Dendritic cell treated with granulocyte-macrophage colony-stimulating factor and Interleukin-4, amounts not matched to agents 40 ng/mL and 50 ng/mL, for 4 days (primary cell): ENCODE measurements at regions of chr1 and their contacts with region 1.

Region 1: GRCh38 chr1:167553136-167554027 is at the start of gene CREG1:
- H3K4me3 Mint-ChIP-seq: peak within 1 kb of the TSS; percentile 92
- H3K27ac Mint-ChIP-seq: peak within 1 kb of the TSS; percentile 87
- H3K4me1 Mint-ChIP-seq: peaks cover 53% of the 10 kb centered on the region
- H3K27me3 Mint-ChIP-seq: no peaks in the 10 kb centered on the region

Region 2: DNA sequence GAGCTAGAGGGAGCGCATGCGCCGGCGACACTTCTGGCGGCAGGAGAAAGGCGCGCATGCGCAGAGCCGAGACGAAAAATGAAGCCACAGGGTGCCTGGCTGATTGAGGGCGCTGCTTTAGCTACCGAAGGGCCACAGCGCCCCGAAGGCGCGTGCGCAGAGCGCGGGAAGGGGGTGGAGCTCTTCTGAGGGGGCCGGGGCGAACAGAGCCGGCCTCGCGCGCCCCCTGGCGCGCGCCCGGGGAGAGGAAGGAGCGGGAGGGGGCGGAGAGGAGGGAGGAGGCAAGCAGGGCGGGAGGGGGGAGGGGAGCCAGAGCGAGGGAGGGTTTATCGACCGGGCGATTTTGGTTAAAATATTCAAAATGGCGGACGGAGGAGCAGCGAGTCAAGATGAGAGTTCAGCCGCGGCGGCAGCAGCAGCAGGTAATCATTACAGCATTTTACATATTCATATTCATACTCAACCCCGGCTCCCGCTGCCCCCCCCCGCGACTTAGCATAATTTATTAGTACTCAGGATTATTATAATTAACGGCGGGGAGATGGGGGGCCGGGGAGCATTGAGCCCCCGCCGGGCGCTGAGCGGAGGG is 332.8 kb before region 1 on chr1 and contains the start of gene POU2F1:
- intact Hi-C with region 1: loop called (anchors 5 kb)
- H3K4me3 Mint-ChIP-seq: peak within 1 kb of the TSS; percentile 83
- H3K27ac Mint-ChIP-seq: peak within 1 kb of the TSS; percentile 94
- H3K4me1 Mint-ChIP-seq: peaks cover 16% of the 10 kb centered on the region
- H3K27me3 Mint-ChIP-seq: no peaks in the 10 kb centered on the region

Region 3: DNA sequence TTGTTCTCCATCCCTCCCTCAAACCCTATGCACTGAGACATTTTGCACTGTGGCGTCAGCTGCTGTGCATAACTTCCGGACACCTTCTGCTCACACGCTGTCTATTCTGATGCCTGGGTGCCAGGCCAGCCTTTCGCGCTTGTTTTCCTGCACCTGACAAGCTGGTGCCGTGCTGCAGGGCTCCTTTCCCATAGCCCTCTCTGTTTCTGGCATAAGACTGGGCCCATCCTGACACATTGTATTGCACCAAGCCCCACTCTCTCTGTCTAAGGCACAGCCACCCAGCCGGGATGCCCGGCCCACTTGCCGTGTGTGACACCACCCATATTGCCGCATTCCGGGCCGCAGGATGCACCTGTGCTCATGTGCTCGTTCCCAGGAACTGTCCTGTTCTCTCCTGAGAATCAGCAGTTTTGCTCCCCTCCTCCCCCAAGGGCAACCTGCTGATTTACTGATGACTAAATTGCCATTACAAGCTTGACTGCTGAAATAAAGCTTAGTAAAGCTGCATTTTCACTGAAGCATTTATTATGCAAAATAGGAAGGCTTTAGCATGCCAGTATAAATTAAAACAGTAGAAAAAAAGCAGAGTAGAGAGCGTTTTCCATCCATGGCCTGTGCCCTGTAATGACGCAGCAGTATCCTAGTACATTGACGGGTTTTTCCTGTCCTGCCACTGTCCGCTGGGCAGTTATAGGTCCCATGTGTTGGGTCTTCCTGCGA is 123.1 kb before region 1 on chr1:
- intact Hi-C with region 1: no loop called
- H3K4me3 Mint-ChIP-seq: no peak overlapping the region
- H3K27ac Mint-ChIP-seq: no peak overlapping the region
- H3K4me1 Mint-ChIP-seq: peaks cover 13% of the 10 kb centered on the region
- H3K27me3 Mint-ChIP-seq: peaks cover 2% of the 10 kb centered on the region

Region 4: GRCh38 chr1:167542109-167543032 is 11.0 kb before region 1 on chr1:
- intact Hi-C with region 1: loop called (anchors 2 kb)
- H3K4me3 Mint-ChIP-seq: peak overlapping the region; percentile 23
- H3K27ac Mint-ChIP-seq: peak overlapping the region; percentile 77
- H3K4me1 Mint-ChIP-seq: peaks cover 82% of the 10 kb centered on the region
- H3K27me3 Mint-ChIP-seq: no peaks in the 10 kb centered on the region